Activated CD4-positive, alpha-beta memory T cell treated with anti-CD3 and anti-CD28 coated beads for 36 hours (primary cell): ENCODE measurements at regions of chr15 and their contacts with region 1.

Region 1: DNA sequence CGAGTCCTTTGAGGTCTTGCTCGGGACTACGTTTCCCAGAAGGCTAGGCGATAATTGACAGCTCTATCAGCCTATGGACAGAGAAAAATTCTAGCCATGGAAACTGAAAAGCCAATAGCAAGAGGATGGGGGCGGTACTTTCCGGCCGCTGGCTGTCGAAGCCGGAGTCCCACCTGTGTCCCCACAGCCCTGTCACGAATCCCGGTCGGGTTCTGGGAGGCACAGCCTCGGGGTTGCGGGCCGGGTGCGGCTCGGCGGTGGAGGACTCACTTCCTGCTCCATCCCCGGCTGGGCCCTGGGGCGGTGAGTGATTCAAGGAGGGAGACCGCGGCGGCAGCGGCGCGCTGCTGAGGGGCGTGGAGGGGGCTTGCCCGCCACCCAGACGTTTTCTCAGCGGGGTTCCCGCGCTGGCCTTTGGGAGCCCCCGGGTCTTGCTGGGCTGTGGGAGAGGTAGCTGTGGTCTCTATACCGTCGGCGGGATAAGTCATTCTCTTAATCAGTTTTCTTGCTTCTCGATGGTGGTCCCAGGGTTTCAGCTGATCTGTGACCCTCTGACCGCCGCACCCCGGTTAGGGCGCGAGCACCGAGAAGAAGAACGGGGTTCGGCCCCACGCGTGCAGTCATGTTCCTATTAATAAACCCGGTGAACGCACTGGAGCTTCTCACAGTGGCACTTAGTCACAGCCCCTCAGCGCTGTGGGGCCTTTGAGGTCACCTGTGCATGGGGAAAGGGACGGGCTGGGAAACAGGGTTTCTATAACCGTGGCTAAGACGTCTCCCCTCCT is at the start of gene ZNF774:
- DNase-seq: peak; percentile 93
- H3K4me3 Mint-ChIP-seq: peak within 1 kb of the TSS; percentile 87
- H3K27ac Mint-ChIP-seq: no peak within 1 kb of the TSS
- H3K4me1 Mint-ChIP-seq: peaks cover 6% of the 10 kb centered on the region
- H3K27me3 Mint-ChIP-seq: peaks cover 4% of the 10 kb centered on the region
- total RNA-seq, gene ZNF774: 0.68 to 1.1 TPM

Region 2: GRCh38 chr15:90336705-90337141 is 15.6 kb before region 1 on chr15:
- CTCF ChIA-PET with region 1: no interaction called
- POLR2A ChIA-PET with region 1: no interaction called
- intact Hi-C with region 1: no loop called
- DNase-seq: peak; percentile 12
- H3K4me3 Mint-ChIP-seq: no peak overlapping the region
- H3K27ac Mint-ChIP-seq: no peak overlapping the region
- H3K4me1 Mint-ChIP-seq: peaks cover 7% of the 10 kb centered on the region
- H3K27me3 Mint-ChIP-seq: no peaks in the 10 kb centered on the region

Region 3: DNA sequence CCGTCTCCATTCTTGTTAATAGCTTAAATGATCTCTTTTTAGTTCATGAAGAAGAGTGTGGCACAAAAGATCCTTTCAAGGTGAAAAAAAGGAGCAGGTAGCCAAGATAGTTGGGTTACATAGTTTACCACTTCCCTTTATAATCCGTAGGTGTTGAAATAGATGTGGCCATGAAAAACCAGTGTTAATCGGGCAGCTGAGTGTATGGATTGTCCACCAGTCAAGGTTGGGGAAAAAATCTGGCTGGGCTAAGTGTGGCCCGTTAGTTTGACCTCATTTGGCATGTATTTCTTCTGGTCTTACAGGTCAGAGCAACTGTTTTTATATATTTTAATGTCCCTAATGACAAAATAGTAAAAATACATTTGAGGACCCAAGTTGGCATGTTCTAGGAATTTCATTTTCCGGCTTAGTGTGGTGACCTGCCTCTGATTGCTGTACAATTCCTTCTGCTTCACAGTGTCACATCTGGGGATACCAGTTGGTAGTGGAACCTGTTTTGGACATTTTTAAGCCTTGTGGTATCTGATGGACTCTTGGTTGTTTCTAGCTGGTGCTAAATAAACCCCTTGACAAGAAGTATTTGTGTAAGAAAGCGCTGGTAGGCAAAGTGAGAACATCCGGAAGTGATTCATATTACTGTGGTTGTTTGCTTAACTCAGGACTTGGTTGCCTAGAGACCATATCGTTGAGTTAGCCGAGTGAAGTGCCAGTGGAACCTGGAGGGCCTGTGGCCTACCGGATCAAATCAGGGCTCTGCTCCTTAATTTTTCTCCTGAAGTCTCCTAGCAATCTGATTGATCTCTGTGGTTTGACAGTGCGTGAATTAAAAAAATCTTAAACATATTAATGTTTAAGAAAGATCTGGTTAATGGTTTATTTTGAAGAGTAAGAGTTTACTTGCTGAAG is 48.4 kb after region 1 on chr15:
- CTCF ChIA-PET with region 1: no interaction called
- POLR2A ChIA-PET with region 1: no interaction called
- intact Hi-C with region 1: loop called (anchors 2 kb)
- DNase-seq: peak; percentile 72
- H3K4me3 Mint-ChIP-seq: peak overlapping the region; percentile 57
- H3K27ac Mint-ChIP-seq: peak overlapping the region; percentile 91
- H3K4me1 Mint-ChIP-seq: peaks cover 66% of the 10 kb centered on the region
- H3K27me3 Mint-ChIP-seq: no peaks in the 10 kb centered on the region